Activated CD4-positive, alpha-beta memory T cell treated with anti-CD3 and anti-CD28 coated beads, Interleukin-2, amount 10 ng/mL, durations not matched to agents 7 days and 5 days (primary cell): ENCODE measurements at regions of chr11 and their contacts with region 1.

Region 1: DNA sequence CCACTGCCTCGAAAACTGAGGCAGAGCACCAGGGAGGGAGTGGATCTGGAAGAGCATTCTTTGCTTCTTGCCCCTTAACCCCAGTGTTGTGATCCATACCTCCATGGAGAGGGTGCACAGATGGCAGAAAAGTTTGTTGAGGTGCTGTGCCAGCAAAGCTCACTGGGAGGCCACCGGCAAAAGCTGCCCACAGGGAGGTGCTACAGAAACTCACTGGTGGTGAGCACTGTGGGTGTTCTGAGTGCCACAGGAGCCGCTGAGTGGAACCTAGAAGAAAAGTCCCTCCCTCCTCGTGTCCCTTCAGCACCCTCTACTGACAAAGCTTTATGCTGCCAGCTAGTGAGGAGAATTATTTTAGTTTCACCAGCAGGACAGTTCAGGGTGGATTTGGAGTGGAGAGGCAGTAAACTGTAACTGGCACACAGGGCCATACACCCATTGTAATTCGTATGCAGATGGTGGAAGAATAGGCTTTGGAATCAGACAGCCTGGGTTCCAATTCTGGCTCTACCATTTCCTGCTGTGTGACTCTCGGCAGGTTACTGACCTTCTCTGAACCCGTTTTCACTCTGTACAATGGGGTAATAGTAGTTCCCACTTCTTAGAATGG is 84.6 kb downstream of the SWAP70 start:
- DNase-seq: peak; percentile 77
- H3K4me3 Mint-ChIP-seq: no peak overlapping the region
- H3K27ac Mint-ChIP-seq: no peak overlapping the region
- H3K4me1 Mint-ChIP-seq: peaks cover 22% of the 10 kb centered on the region
- H3K27me3 Mint-ChIP-seq: no peaks in the 10 kb centered on the region

Region 2: DNA sequence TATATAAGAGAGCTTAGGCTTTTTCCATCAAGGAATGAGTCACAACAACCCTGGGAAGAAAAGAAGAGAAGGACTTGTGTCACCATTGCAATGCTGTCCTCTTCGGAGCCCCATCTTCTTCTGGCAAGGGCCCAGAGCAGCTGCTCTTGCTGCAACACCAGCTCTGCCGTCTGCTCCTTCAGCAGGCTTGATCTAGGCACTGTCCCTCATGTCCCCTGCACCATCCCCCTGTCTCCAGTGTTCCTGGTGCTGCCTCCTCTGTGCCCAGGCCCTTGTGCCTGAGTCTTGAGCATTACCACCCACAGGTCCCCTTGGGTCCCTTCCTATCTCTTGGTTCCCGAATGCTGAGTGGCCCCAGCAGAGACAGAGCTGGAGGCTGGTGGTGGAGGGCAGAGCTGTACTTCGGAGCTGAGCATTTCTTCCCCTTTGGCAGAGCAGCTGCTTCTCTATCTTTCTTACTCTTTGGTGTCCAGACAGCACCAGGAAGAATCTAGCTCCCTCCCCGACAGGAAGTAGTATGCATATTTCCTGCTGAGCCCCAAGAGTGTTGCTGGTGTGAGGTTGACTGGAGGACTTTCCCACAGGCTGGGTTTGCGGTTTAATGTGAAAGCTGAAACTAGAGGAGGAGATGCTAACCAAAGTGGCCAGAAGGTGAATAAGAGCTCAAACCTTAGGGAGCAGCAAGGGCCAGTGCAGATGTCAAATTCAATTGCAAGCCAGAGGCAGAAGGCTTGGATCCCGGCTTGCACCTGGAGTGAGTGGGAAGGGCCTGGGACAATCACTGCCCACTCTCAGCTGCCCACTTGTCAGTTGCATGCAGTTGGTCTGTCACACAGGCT is 147.2 kb before region 1 on chr11:
- CTCF ChIA-PET with region 1: interaction called, 20 read pairs
- POLR2A ChIA-PET with region 1: interaction called, 7 read pairs
- DNase-seq: peak; percentile 83
- H3K4me3 Mint-ChIP-seq: peak overlapping the region; percentile 49
- H3K27ac Mint-ChIP-seq: peak overlapping the region; percentile 59
- H3K4me1 Mint-ChIP-seq: peaks cover 25% of the 10 kb centered on the region
- H3K27me3 Mint-ChIP-seq: peaks cover 19% of the 10 kb centered on the region

Region 3: GRCh38 chr11:9651899-9652748 is 96.3 kb before region 1 on chr11:
- CTCF ChIA-PET with region 1: no interaction called
- POLR2A ChIA-PET with region 1: no interaction called
- DNase-seq: no peak
- H3K4me3 Mint-ChIP-seq: no peak overlapping the region
- H3K27ac Mint-ChIP-seq: no peak overlapping the region
- H3K4me1 Mint-ChIP-seq: no peaks in the 10 kb centered on the region
- H3K27me3 Mint-ChIP-seq: peaks cover 2% of the 10 kb centered on the region

Region 4: GRCh38 chr11:9771071-9771511 is 22.6 kb after region 1 on chr11:
- CTCF ChIA-PET with region 1: no interaction called
- POLR2A ChIA-PET with region 1: no interaction called
- DNase-seq: no peak
- H3K4me3 Mint-ChIP-seq: no peak overlapping the region
- H3K27ac Mint-ChIP-seq: no peak overlapping the region
- H3K4me1 Mint-ChIP-seq: no peaks in the 10 kb centered on the region
- H3K27me3 Mint-ChIP-seq: no peaks in the 10 kb centered on the region

Region 5: DNA sequence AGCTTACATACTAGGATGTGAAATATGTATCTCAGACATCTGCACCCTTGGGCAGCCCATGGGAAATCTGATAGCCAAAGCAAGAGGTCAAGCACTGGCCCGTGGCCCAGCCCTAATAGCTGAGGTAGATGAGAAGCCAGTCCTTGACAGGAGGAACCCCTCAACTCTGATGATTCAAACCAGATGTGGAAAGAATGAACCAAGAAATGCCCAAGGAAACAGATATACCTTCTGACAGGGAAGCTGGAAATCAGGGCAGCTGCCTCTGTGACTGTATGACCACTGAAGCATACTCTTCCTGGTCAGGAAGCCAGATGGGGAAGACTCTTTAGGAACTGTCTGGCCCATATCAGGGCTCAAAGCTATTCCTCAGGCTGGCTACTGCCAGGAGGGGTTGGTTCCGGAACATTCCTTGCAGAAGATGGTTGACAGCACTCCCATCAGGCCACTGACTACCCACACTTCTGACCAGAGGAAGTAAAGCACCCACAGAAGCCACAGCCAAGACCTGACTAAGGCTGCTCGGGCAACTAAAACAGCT is 39.6 kb after region 1 on chr11:
- CTCF ChIA-PET with region 1: no interaction called
- POLR2A ChIA-PET with region 1: no interaction called
- DNase-seq: no peak
- H3K4me3 Mint-ChIP-seq: no peak overlapping the region
- H3K27ac Mint-ChIP-seq: no peak overlapping the region
- H3K4me1 Mint-ChIP-seq: peaks cover 4% of the 10 kb centered on the region
- H3K27me3 Mint-ChIP-seq: no peaks in the 10 kb centered on the region